ENCODE measurements at regions of chr21 and their contacts with region 1.

Region 1: GRCh38 chr21:42781150-42781970 is 98.0 kb downstream of the WDR4 start:
- DNase-seq: peak in 1 of 2 donors; percentile 29
- ATAC-seq: peak in 6 of 8 donors; percentile 16 to 38 (median 32)
- H3K4me3 ChIP-seq: peak overlapping the region in 9 of 10 donors; percentile 17 to 43 (median 26)
- H3K27ac ChIP-seq: peak overlapping the region in 7 of 10 donors; percentile 31 to 77 (median 48)
- H3K4me1 ChIP-seq: peaks cover 3 to 36% (median 31%) of the 10 kb centered on the region in 9 donors
- H3K27me3 ChIP-seq: peaks cover 0 to 59% (median 34%) of the 10 kb centered on the region in 7 donors
- CTCF ChIP-seq: no peak

Region 2: GRCh38 chr21:42513985-42514882 is 267.1 kb before region 1 on chr21:
- intact Hi-C with region 1: no loop called
- DNase-seq: peak; percentile 41 to 64
- ATAC-seq: peak; percentile 62 to 86 (median 76)
- H3K4me3 ChIP-seq: peak overlapping the region; percentile 68 to 99 (median 90)
- H3K27ac ChIP-seq: peak overlapping the region; percentile 29 to 86 (median 72)
- H3K4me1 ChIP-seq: peaks cover 0 to 24% (median 15%) of the 10 kb centered on the region in 9 donors
- H3K27me3 ChIP-seq: no peaks in the 10 kb centered on the region
- CTCF ChIP-seq: peak in 1 of 9 donors; percentile 4

Region 3: DNA sequence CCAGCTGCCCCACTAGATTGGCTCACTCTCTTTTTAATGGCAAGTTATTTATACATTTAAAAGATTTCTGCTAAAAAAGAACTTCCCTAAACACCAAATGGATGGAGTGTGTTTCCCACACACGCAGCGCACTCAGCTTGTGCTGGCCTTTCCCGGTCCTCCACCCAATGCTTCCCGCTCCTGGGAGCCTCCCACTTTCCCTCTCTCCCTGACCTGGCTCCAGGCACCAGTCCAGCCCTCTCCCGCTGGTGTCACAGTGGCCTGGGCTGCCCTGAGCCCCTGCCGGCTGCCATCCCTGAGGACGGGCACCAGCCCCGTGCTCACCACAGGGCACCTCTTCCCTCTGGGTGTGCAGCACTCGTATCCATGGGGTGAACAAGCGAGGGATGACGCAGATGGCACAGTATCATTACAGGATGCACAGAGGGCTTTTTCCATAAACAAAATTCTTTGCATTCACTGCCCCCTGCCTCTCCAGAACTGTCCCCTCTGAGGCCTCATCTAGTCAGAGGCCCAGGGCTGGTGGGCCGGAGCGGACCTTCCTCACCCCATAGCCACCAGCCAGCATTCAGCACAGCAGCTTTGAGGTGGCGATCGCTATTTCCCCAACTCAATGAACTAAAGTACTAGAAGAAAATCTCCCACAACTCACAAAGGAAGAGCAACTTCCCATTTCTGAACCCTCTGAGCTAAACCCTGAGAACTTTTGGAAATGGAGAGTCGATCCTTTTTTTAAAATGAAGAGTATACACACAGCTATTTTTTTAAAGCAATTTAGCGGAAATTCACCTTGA is 199.2 kb before region 1 on chr21:
- intact Hi-C with region 1: no loop called
- DNase-seq: no peak
- ATAC-seq: peak in 2 of 8 donors; percentile 18 to 34
- H3K4me3 ChIP-seq: no peak overlapping the region
- H3K27ac ChIP-seq: no peak overlapping the region
- H3K4me1 ChIP-seq: peaks cover 0 to 6% (median 0%) of the 10 kb centered on the region in 9 donors
- H3K27me3 ChIP-seq: no peaks in the 10 kb centered on the region
- CTCF ChIP-seq: no peak

Region 4: DNA sequence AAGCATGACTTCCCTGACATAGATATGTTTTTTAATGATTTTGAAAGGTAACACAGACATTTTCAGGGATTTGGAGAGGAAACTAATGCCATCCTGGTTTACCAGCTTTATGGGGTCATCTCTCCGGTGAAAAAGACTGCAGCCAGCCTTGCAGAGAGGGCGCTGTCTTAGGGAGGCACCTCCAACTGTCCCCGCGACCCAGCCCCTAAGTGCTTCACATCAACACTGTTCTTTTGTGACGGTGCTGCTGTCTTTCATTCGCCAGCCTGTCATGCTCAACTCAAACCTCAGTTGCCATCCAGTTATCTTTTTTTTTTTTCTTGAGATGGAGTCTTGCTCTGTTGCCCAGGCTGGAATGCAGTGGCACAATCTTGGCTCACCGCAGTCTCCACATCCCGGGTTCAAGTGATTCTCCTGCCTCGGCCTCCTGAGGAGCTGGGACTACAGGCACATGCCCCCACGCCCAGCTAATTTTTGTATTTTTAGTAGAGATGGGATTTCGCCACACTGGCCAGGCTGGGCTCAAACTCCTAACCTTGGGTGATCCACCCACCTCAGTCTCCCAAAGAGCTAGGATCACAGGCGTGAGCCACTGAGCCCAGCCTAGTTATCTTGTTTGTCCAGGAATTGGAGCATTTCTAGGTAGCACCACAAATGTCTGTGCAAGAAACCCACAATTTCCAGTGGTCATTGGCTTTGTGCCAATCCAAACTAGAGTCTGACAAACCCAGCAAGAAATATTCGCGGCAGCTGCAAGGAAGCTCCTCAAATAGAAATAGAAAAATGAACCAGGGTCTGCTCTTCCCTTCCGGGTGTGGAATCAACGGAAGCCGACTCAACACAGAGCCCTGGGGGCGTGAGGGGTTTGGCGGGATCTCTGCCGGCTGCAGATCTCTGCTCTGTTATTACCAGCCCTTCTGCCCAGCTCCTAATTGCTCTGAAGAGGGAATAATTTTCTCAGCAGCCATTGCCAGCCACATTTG is 103.7 kb before region 1 on chr21:
- intact Hi-C with region 1: loop called in 1 of 10 experiments (anchors 10 kb)
- DNase-seq: peak in 1 of 2 donors; percentile 34
- ATAC-seq: peak in 1 of 8 donors; percentile 2
- H3K4me3 ChIP-seq: no peak overlapping the region
- H3K27ac ChIP-seq: peak overlapping the region in 3 of 10 donors; percentile 34 to 51 (median 40)
- H3K4me1 ChIP-seq: peaks cover 0 to 41% (median 22%) of the 10 kb centered on the region in 9 donors
- H3K27me3 ChIP-seq: peaks cover 0 to 26% (median 4%) of the 10 kb centered on the region in 7 donors
- CTCF ChIP-seq: no peak

Region 5: GRCh38 chr21:42724226-42724920 is 57.0 kb before region 1 on chr21:
- intact Hi-C with region 1: loop called in 1 of 10 experiments (anchors 2 kb)
- DNase-seq: peak in 1 of 2 donors; percentile 44
- ATAC-seq: peak; percentile 36 to 85 (median 78)
- H3K4me3 ChIP-seq: no peak overlapping the region
- H3K27ac ChIP-seq: peak overlapping the region in 8 of 10 donors; percentile 5 to 79 (median 58)
- H3K4me1 ChIP-seq: peaks cover 0 to 46% (median 34%) of the 10 kb centered on the region in 9 donors
- H3K27me3 ChIP-seq: peaks cover 0 to 6% (median 0%) of the 10 kb centered on the region in 7 donors
- CTCF ChIP-seq: no peak

Region 6: DNA sequence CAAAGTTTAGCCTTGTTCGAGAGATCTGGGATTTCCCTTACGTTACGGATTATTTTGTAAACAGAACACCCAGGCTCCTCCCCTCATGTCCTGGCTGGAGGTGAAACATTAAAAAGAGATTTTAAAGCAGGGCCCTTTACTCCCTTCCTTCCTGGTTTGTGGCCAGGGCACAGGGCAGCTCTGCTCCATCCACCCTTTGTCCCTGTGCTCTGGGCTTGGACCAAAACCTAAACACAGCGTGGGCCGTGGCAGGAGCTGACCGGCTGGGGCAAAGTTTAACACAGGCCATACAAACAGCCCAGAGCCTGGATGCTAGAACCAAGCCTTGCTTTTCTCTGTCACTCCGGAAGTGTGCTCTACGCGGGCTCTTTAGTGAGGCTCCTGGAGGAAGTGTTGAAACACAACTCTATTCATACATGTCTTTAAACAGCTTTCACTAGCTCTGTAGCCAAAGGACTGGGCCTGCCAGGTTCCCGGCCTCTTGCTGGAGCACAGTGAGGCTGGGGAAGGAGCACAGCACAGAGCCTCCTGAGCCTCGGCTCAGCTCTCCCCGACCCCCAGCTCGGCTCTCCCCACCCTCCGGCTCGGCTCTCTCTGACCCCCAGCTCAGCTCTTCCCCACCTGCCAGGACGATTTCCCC is 43.3 kb before region 1 on chr21:
- intact Hi-C with region 1: loop called in 1 of 10 experiments (anchors 5 kb)
- DNase-seq: peak; percentile 50 to 67
- ATAC-seq: peak; percentile 81 to 92 (median 90)
- H3K4me3 ChIP-seq: peak overlapping the region in 2 of 10 donors; percentile 5 to 20
- H3K27ac ChIP-seq: peak overlapping the region; percentile 3 to 90 (median 79)
- H3K4me1 ChIP-seq: peaks cover 0 to 52% (median 40%) of the 10 kb centered on the region in 9 donors
- H3K27me3 ChIP-seq: peaks cover 0 to 4% (median 0%) of the 10 kb centered on the region in 7 donors
- CTCF ChIP-seq: no peak